ENCODE measurements at regions of chr19 and their contacts with region 1.

Region 1: GRCh38 chr19:41541990-41542584 is 33.9 kb upstream of the CEACAM21 start:
- DNase-seq: peak in 1 of 2 experiments; percentile 87
- H3K4me3 ChIP-seq: no peak overlapping the region
- H3K27ac ChIP-seq: no peak overlapping the region
- H3K4me1 ChIP-seq: no peaks in the 10 kb centered on the region
- H3K27me3 ChIP-seq: no peaks in the 10 kb centered on the region; a peak in 1 of 7 replicates
- CTCF ChIP-seq: peak; percentile 35 to 60 (median 54)
- EP300 ChIP-seq: no peak
- POLR2A ChIP-seq: no peak
- RAD21 ChIP-seq: peak; percentile 27 to 53; a peak in 3 of 4 replicates

Region 2: GRCh38 chr19:41449079-41449864 is 92.8 kb before region 1 on chr19:
- CTCF ChIA-PET with region 1: interaction called, 10 read pairs
- POLR2A ChIA-PET with region 1: no interaction called
- DNase-seq: peak; percentile 66 to 90
- H3K4me3 ChIP-seq: peak overlapping the region in 1 of 4 experiments; percentile 20; a peak in 1 of 8 replicates
- H3K27ac ChIP-seq: no peak overlapping the region
- H3K4me1 ChIP-seq: no peaks in the 10 kb centered on the region
- H3K27me3 ChIP-seq: 0 out of 7 replicates have a peak, but pooled peaks cover 0 to 3% (median 0%) of the 10 kb centered on the region in 4 experiments
- CTCF ChIP-seq: peak; percentile 96 to 98 (median 97)
- EP300 ChIP-seq: no peak
- POLR2A ChIP-seq: no peak
- RAD21 ChIP-seq: peak; percentile 86 to 93

Region 3: DNA sequence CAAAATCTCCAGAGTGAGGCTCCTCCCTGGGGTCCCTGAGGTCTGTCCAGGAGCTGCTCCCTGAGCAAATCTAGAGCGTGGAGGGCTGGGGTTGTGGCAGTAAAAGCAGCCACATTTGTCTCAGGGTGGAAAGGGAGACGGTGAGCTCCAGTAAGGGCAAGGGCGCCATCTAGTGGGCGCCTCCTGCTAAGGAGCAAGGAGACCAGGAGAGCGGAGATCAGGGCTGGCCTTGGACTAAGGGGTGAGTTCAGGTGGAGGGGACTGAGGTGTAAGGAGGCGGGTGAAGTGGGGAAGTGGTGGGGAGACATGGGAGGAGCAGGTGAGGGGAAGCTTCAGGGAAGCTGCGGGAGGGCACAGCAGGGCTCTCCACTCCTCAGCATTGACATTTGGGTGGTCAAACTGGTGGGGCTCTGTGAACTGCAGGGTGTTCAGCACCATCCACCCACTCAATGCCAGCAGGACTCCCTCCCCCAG is 28.6 kb after region 1 on chr19:
- CTCF ChIA-PET with region 1: interaction called, 34 read pairs
- POLR2A ChIA-PET with region 1: no interaction called
- DNase-seq: peak; percentile 50 to 84
- H3K4me3 ChIP-seq: no peak overlapping the region
- H3K27ac ChIP-seq: no peak overlapping the region
- H3K4me1 ChIP-seq: no peaks in the 10 kb centered on the region; a peak in 2 of 7 replicates
- H3K27me3 ChIP-seq: peaks cover 0 to 13% (median 4%) of the 10 kb centered on the region in 4 experiments; a peak in 3 of 7 replicates
- CTCF ChIP-seq: peak; percentile 86 to 93 (median 88)
- EP300 ChIP-seq: no peak
- POLR2A ChIP-seq: no peak
- RAD21 ChIP-seq: peak; percentile 89 to 93

Measured in H1 (cell line).